ENCODE measurements at regions of chr16 and their contacts with region 1.

Region 1: DNA sequence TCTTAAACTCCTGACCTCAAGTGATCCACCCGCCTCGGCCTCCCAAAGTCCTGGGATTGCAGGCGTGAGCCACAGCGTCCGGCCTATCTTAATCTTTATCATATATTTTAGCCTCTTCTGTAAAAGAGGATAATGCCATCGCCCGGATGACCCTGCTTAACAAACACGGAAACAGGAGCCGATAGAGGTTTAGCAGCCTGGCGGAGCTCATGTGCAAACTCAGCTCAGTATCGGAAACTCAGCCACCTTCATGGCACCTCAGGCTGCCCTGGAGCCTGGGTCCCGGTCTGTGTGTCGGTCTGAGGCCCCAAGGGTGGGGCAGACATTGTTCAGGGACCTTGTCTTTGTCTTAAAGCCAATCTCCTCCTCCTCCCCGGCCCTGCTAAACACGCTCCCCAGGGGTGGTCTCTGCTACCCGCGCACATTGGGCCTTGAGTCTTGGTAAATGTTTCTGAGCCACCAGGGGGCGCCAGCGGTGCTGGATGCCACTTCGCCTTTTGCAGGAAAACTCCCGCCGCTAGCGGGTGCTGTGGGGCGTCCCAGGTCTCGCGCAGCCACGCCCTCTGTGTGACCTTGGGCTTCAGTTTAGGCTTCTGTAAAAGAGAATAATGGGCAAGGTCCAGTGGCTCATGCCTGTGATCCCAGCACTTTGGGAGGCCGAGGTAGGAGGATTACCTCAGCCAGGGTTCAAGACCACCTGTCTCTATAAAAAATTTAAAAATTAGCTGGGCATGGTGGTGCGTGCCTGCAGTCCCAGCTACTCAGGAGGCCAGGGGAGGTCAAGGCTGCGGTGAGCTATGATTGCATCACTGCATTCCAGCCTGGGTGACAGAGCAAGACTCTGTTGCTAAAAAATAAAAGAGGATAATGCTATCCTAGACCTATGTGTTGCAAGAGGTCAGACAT is 2.7 kb downstream of the CETP start:
- DNase-seq: peak; percentile 99
- H3K4me3 ChIP-seq: peak overlapping the region in 1 of 8 donors; percentile 7
- H3K27ac ChIP-seq: peak overlapping the region; percentile 39 to 77 (median 54)
- H3K4me1 ChIP-seq: peaks cover 25 to 82% (median 59%) of the 10 kb centered on the region in 6 donors
- H3K27me3 ChIP-seq: no peaks in the 10 kb centered on the region
- CTCF ChIP-seq: peak; percentile 95 to 99 (median 98)
- POLR2A ChIP-seq: no peak

Region 2: GRCh38 chr16:55257966-55258613 is 1706.4 kb before region 1 on chr16:
- intact Hi-C with region 1: no loop called
- DNase-seq: peak; percentile 76
- H3K4me3 ChIP-seq: no peak overlapping the region
- H3K27ac ChIP-seq: no peak overlapping the region
- H3K4me1 ChIP-seq: no peaks in the 10 kb centered on the region
- H3K27me3 ChIP-seq: peaks cover 0 to 19% (median 0%) of the 10 kb centered on the region in 7 donors
- CTCF ChIP-seq: peak in 9 of 11 experiments; percentile 26 to 74 (median 54)
- POLR2A ChIP-seq: no peak

Region 3: GRCh38 chr16:56910654-56911539 is 53.6 kb before region 1 on chr16:
- intact Hi-C with region 1: no loop called
- DNase-seq: no peak
- H3K4me3 ChIP-seq: peak overlapping the region in 1 of 8 donors; percentile 40
- H3K27ac ChIP-seq: peak overlapping the region; percentile 32 to 92 (median 76)
- H3K4me1 ChIP-seq: peaks cover 22 to 49% (median 40%) of the 10 kb centered on the region in 6 donors
- H3K27me3 ChIP-seq: no peaks in the 10 kb centered on the region
- CTCF ChIP-seq: no peak
- POLR2A ChIP-seq: no peak

Region 4: DNA sequence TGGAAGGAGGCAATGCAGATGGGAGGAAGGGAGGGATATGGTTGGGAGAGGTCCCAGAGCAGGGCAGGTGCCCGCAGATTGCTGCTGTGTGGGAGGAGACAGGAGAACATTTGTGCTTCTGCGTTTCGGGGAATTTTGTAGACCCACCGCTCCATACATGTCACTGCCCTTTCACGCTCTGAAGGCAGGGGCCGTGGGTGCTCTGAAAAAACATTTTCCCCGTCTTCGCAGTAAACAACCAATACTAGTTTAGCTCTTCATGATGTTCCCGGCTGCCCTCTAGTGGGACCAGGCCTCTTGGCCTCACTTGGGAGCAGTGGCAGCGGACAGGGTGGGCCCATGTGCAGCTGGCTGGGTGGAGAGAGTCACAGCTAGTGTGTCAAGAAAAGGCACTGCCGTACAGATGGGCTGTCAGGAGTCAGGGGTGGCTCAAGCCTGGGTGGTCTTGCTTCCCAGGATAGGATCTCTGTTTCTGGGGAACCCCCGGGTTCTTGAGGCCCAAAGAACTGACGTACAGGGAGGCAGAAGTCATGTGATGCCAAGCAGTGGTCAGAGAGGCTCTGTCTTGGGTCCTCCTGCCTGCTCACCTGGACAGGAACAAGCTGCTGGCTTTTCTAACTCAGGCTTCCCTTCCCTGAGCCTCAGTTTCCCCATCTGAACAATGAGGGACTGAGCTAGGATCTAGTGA is 81.3 kb after region 1 on chr16:
- intact Hi-C with region 1: loop called (anchors 10 kb)
- DNase-seq: peak; percentile 87
- H3K4me3 ChIP-seq: no peak overlapping the region
- H3K27ac ChIP-seq: peak overlapping the region in 7 of 8 donors; percentile 44 to 96 (median 86)
- H3K4me1 ChIP-seq: peaks cover 24 to 62% (median 53%) of the 10 kb centered on the region in 6 donors
- H3K27me3 ChIP-seq: no peaks in the 10 kb centered on the region
- CTCF ChIP-seq: peak; percentile 34 to 78 (median 60)
- POLR2A ChIP-seq: no peak

Region 5: DNA sequence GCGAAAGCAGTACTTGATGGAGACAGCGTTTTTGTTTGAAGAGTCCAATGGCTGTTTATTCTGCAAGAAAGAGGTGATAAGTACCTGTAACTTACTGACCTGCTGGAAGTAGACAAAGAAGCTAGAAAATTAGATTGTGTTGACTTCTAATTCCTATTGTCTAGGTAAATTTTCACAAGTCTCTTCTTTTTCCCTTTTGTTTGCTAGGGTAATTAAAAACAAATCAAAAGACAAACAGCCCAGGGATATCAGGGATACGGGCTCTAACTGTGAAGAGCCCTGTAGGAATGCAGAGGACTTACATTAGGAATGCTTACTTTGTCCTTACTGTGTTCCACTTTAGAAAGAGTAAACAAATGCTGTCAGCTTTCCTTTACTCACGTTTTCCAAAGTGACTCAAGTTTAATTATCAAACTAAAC is 214.3 kb after region 1 on chr16:
- intact Hi-C with region 1: loop called (anchors 10 kb)
- DNase-seq: no peak
- H3K4me3 ChIP-seq: no peak overlapping the region
- H3K27ac ChIP-seq: no peak overlapping the region
- H3K4me1 ChIP-seq: peaks cover 0 to 45% (median 16%) of the 10 kb centered on the region in 6 donors
- H3K27me3 ChIP-seq: no peaks in the 10 kb centered on the region
- CTCF ChIP-seq: no peak
- POLR2A ChIP-seq: no peak

Measured in spleen (tissue), 13 donors.